HEK293 (cell line): ENCODE measurements at regions of chr14 and their contacts with region 1.

Region 1: GRCh38 chr14:73759714-73760597 is 45.8 kb upstream of the PNMA1 start:
- H3K4me3 ChIP-seq: peak overlapping the region; percentile 77
- H3K27ac ChIP-seq: peak overlapping the region; percentile 91
- H3K4me1 ChIP-seq: peaks cover 29% of the 10 kb centered on the region
- CTCF ChIP-seq: 0 out of 2 replicates have a peak, but pooled peaks have one; percentile 9

Region 2: GRCh38 chr14:73741386-73741875 is 18.5 kb before region 1 on chr14:
- CTCF ChIA-PET with region 1: interaction called, 13 read pairs
- POLR2A ChIA-PET with region 1: interaction called, 5 read pairs
- H3K4me3 ChIP-seq: no peak overlapping the region
- H3K27ac ChIP-seq: no peak overlapping the region
- H3K4me1 ChIP-seq: peaks cover 13% of the 10 kb centered on the region
- CTCF ChIP-seq: no peak

Region 3: DNA sequence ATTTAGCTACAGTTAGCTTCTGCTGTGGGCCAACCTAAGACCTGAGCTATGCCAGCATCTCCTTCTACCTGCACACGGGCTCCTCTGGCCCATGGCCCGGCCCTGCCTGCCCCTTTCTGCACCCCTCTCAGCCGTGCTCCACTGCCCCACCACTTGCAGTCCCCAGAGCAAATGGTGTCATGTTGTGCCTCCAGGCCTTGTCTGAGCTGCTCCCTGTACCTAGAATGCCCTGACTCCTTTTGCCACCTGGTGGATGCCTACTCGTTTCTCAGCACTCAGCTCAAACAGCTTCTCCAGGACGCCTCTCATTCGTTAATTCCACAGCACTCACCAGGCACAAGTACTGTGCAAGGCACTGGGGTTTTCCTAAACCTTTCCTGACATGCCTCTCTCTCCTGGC is 17.4 kb after region 1 on chr14:
- CTCF ChIA-PET with region 1: interaction called, 19 read pairs
- POLR2A ChIA-PET with region 1: interaction called, 10 read pairs
- H3K4me3 ChIP-seq: no peak overlapping the region
- H3K27ac ChIP-seq: no peak overlapping the region
- H3K4me1 ChIP-seq: no peaks in the 10 kb centered on the region
- CTCF ChIP-seq: peak; percentile 62

Region 4: GRCh38 chr14:73825551-73826188 is 65.7 kb after region 1 on chr14:
- CTCF ChIA-PET with region 1: interaction called, 13 read pairs
- POLR2A ChIA-PET with region 1: interaction called, 4 read pairs
- H3K4me3 ChIP-seq: no peak overlapping the region
- H3K27ac ChIP-seq: no peak overlapping the region
- H3K4me1 ChIP-seq: no peaks in the 10 kb centered on the region; the same call in 1 of the 2 replicates
- CTCF ChIP-seq: peak; percentile 31; the same call in 1 of the 2 replicates